Posterior vena cava (tissue), 2 donors: ENCODE measurements at regions of chr11 and their contacts with region 1.

Region 1: DNA sequence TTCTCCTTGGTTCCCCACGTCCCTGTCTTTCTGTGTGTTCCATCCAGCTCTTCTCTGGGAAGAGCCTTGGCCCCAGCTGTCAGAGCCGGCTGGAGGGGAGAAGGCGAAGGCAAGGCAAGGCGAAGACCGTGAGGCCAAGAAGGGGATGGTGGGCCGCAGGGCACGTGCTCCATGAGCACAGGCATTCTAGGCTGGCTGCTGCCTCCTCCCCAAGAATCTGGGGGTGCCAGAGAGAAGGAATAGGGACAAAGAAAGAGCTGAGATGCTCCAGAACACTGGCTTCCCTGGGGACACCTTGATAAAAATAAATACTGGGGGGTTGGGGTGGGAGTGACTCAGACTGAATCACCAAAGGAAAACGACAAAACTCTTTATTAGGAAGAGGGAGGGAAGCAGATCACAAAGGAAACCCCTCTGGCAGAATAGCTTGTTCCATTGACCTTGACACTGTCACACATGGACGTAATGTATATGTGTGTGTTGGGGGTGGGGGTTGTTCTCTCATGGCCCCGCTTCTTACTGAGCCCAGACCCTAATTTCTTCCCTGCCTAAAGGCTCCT is 52.5 kb downstream of the NECTIN1 start:
- DNase-seq: no peak

Region 2: DNA sequence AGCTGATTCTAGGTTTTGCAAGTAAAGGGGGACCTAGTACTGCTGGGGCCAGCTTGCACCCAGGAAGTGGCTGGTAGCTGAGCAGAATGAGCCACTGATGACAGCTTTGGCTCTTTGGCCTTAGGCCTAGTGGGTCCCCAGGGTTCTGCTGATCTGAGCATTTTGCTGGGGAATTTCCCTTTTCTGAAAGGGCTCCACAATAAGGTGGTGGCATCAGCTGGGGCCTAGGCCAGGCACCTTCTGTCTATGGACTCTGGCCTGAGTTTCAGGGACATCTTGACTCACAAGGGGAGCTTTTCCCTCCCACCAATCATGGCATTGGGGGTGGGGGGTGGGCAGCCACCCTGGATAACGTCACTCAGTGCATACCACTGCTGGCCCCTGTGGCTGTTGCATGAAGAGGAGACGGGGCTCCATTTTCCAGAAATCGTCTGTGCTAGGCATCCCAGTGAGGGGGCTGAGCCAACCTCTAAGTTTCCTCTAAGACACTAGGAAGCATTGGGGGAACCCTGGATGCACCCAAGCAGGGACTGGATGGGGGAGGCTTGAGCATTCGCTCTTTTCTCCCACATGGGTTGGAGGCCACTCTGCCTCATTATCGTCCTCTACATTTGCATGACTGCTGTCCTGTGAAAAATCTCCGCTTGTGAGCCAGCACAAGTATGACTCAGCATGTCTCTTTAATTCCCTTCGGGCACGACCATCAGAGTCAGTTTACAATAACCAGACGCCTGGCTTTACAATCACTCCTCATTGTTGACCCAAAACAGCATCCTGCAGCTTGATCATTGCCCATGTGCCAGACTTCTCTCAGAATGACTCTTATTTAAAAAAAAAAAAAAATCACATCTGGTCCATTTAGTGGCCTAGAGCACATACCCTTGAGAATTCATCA is 108.6 kb before region 1 on chr11:
- intact Hi-C with region 1: no loop called
- DNase-seq: no peak

Region 3: GRCh38 chr11:119721129-119722120 is 44.9 kb after region 1 on chr11:
- intact Hi-C with region 1: loop called (anchors 1 to 5 kb)
- DNase-seq: no peak

Region 4: DNA sequence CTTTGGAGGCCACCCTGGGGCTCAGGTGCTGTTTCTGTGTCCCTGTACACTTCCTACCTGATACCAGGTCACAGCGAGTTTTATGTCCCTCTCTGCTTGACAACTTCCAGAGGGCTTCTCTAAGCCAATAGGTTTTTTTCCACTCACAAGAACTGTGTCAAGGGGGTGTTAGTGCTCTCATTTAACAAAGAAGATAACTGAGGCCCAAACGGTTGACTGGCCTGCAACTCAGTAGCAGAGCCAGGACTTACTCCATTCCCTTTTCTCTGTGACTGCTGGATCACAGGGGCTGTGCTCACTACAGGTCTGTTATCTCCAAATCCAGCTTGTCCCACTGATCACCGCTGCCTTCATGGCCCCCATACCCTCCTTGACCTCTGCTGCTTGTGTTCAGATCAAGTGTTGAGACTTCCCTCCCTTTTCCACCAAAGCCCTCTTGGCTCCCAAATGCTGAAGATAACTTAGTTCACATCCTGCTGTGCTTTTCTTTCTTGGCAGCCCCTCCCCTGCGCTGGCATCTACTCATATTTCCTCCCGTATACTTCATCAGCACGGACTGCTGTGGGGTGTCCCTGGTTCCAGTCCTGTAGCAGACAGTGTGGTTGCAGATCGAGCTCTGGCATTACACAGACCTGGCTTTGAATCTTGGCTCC is 604.7 kb after region 1 on chr11:
- intact Hi-C with region 1: loop called in 1 of 2 experiments (anchors 2 kb)
- DNase-seq: no peak